GM12878 (cell line): ENCODE measurements at regions of chr9 and their contacts with region 1.

Region 1: GRCh38 chr9:134099123-134099787 is 31.4 kb upstream of the BRD3 start:
- DNase-seq: peak; percentile 24
- ATAC-seq: peak; percentile 93
- H3K4me3 ChIP-seq: no peak overlapping the region
- H3K27ac ChIP-seq: no peak overlapping the region
- H3K4me1 ChIP-seq: no peaks in the 10 kb centered on the region; the same call in 1 of the 2 replicates
- H3K27me3 ChIP-seq: no peaks in the 10 kb centered on the region; a peak in 1 of 4 replicates
- CTCF ChIP-seq: peak; percentile 84 to 86 (median 84)
- EP300 ChIP-seq: no peak
- POLR2A ChIP-seq: no peak
- RAD21 ChIP-seq: peak; percentile 79

Region 2: DNA sequence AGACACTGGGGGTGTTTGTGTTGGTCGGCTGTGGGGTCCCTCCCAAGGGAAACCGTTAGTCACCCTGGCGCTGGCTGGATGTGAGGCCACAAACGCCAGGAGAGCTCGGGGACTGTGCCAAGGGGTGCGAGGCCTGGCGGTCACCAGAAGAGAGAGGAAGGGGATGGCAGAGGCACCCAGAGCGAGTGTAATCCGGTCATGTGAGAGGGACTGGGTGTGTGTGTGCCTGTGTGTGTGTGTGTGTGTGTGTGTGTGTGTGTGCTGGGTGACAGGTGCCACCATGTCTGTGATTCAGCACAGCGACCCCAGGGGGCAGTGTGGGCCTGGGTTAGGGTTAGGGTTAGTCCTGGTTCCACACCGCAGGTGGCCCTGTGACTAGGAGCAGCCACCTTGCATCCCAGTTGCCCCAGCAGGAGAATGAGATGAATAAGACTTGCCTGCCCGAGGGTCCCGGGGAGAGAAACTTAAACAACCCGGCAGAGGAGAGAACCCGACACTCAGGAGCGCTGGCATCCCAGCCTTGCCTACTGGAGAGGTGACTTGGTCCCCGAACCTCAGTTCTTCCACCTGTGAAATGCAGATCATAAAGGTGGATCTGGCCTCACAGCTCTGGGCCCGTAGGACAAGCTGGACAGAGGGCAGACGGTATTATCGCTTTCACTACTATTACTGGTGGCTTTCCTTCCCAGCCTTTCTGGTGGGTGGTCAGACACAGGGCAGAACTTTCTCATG is 566.2 kb before region 1 on chr9:
- CTCF ChIA-PET with region 1: no interaction called
- POLR2A ChIA-PET with region 1: no interaction called
- RAD21 ChIA-PET with region 1: no interaction called
- SMC1A ChIA-PET with region 1: no interaction called
- in situ Hi-C with region 1: loop called (anchors 5 kb)
- intact Hi-C with region 1: no loop called
- DNase-seq: peak; percentile 15
- ATAC-seq: peak; percentile 83
- H3K4me3 ChIP-seq: no peak overlapping the region
- H3K27ac ChIP-seq: no peak overlapping the region
- H3K4me1 ChIP-seq: no peaks in the 10 kb centered on the region
- H3K27me3 ChIP-seq: peaks cover 8 to 10% of the 10 kb centered on the region in 2 experiments; a peak in 3 of 4 replicates
- CTCF ChIP-seq: peak; percentile 57 to 69 (median 65)
- EP300 ChIP-seq: no peak
- POLR2A ChIP-seq: no peak
- RAD21 ChIP-seq: peak; percentile 71

Region 3: GRCh38 chr9:133742849-133743444 is 356.3 kb before region 1 on chr9:
- CTCF ChIA-PET with region 1: no interaction called
- POLR2A ChIA-PET with region 1: no interaction called
- RAD21 ChIA-PET with region 1: no interaction called
- SMC1A ChIA-PET with region 1: no interaction called
- in situ Hi-C with region 1: no loop called
- intact Hi-C with region 1: loop called (anchors 1 kb)
- DNase-seq: peak; percentile 23
- ATAC-seq: peak; percentile 92
- H3K4me3 ChIP-seq: no peak overlapping the region
- H3K27ac ChIP-seq: no peak overlapping the region
- H3K4me1 ChIP-seq: no peaks in the 10 kb centered on the region
- H3K27me3 ChIP-seq: peaks cover 0 to 2% of the 10 kb centered on the region in 2 experiments; a peak in 1 of 4 replicates
- CTCF ChIP-seq: peak; percentile 97 to 99 (median 99)
- EP300 ChIP-seq: no peak
- POLR2A ChIP-seq: no peak
- RAD21 ChIP-seq: peak; percentile 63

Region 4: GRCh38 chr9:133792721-133793470 is 306.4 kb before region 1 on chr9:
- CTCF ChIA-PET with region 1: interaction called, 3 read pairs
- POLR2A ChIA-PET with region 1: no interaction called
- RAD21 ChIA-PET with region 1: no interaction called
- SMC1A ChIA-PET with region 1: no interaction called
- in situ Hi-C with region 1: no loop called
- intact Hi-C with region 1: loop called (anchors 10 kb)
- DNase-seq: no peak
- ATAC-seq: peak; percentile 94
- H3K4me3 ChIP-seq: no peak overlapping the region
- H3K27ac ChIP-seq: no peak overlapping the region; the same call in 1 of the 2 replicates
- H3K4me1 ChIP-seq: peaks cover 19% of the 10 kb centered on the region
- H3K27me3 ChIP-seq: no peaks in the 10 kb centered on the region
- CTCF ChIP-seq: peak; percentile 90 to 97 (median 96)
- EP300 ChIP-seq: no peak
- POLR2A ChIP-seq: no peak
- RAD21 ChIP-seq: peak; percentile 93